HEK293 (cell line): ENCODE measurements at regions of chr14 and their contacts with region 1.

Region 1: DNA sequence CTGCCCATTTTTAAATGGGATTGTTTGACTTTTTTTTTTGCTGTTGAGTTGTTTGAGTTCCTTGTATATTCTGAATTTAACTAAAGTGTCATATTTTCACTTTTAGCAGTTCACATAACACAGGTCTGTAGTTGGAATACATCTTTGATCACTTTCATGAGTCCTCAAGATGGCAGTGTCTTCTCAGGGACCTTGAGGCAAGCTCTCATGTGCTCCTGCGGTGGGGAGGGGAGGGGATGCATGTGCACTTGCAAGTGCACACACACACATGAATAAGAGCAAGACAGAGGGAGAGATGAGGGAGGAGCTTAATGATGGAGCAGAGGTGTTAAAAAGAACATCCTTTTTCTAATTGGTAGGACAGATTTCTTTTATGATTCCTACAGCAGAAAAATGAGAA is 291.4 kb upstream of the OR4E1 start:
- H3K4me3 ChIP-seq: no peak overlapping the region
- H3K27ac ChIP-seq: no peak overlapping the region
- H3K4me1 ChIP-seq: no peaks in the 10 kb centered on the region
- CTCF ChIP-seq: no peak

Region 2: GRCh38 chr14:21987937-21988336 is 22.9 kb after region 1 on chr14:
- CTCF ChIA-PET with region 1: interaction called, 12 read pairs
- POLR2A ChIA-PET with region 1: no interaction called
- H3K4me3 ChIP-seq: no peak overlapping the region
- H3K27ac ChIP-seq: no peak overlapping the region
- H3K4me1 ChIP-seq: peaks cover 2% of the 10 kb centered on the region; the same call in 1 of the 2 replicates
- CTCF ChIP-seq: no peak

Region 3: DNA sequence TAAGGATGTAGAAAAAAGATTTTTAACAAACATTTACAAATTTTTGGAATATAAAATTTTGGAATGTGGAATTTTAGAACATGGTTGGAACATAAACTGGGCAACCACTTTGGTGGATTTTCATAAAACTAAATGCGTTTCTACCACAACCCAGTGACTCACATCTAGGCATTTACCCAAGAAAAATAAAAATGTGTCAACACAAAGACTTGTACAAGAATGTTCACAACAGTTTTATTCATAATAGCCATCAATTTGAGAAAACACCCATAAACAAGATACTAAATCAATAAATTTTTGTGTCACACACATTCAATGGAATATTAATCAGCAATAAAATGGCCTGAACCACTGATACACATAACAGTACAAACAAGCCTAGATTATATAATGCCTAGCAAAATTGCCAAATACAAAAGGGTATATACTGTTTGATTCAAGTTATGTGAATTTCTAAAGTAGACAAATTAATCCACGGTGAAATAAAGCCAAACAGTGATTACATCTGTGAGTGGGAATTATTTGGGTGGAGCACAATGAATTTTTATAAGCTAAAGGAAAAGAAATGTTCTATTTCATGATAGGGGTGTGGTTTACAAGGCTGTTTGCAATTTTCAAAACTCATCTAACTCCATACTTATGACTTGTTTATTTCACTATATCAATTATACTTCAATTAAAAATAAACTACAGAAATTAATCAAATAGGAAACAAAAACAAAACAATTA is 123.7 kb after region 1 on chr14:
- CTCF ChIA-PET with region 1: no interaction called
- POLR2A ChIA-PET with region 1: no interaction called
- H3K4me3 ChIP-seq: no peak overlapping the region
- H3K27ac ChIP-seq: no peak overlapping the region
- H3K4me1 ChIP-seq: no peaks in the 10 kb centered on the region
- CTCF ChIP-seq: no peak